Activated naive CD4-positive, alpha-beta T cell treated with anti-CD3 and anti-CD28 coated beads for 36 hours (primary cell): ENCODE measurements at regions of chr12 and their contacts with region 1.

Region 1: DNA sequence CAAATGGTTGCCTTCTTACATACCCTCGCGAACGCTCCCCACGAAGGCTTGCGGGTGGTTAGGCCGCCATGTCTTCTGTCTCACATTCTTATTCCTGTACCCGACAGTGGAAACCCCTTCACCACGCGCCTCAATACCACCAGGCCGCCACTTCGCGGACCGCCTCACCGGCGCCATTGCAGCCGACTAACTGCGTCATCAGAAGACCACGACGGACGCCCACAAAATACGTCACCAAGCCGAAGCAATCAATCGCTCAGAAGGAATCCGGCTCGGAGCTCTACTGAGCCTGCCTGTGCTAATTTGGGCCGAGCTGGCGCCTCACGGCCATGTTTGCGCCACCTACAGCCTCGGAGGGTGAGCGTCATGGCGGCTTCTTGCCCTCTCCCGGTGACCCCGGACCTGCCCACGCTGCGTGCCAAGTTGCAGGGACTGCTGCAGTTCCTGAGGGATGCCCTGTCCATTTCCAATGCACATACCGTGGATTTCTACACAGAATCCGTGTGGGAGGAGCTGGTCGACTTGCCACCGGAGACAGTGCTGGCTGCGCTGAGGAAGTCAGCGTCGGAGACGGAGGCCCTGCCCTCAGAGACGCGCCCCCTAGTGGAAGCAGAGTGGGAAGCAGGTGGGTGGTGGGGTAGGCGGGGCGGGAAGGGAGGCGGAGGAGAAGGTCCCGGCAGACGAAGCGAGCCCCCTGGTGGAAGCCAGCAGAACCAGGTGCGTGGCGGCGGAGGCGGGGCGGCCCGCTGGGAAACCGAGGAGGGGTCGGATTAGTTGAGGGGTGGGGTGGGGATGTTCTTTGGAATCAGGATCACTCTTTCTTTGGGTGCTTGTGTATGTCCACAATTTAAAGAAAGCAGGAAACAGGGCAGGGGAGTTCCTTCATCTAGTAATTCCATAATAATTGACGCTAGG is at the starts of genes CCDC59 and METTL25:
- DNase-seq: peak; percentile 98
- H3K4me3 Mint-ChIP-seq: peak within 1 kb of the TSS; percentile 93
- H3K27ac Mint-ChIP-seq: peak within 1 kb of the TSS; percentile 96
- H3K4me1 Mint-ChIP-seq: peaks cover 42% of the 10 kb centered on the region
- H3K27me3 Mint-ChIP-seq: no peaks in the 10 kb centered on the region
- total RNA-seq, gene CCDC59: 87.1 to 93.3 TPM
- total RNA-seq, gene METTL25: 4.1 to 5.7 TPM

Region 2: DNA sequence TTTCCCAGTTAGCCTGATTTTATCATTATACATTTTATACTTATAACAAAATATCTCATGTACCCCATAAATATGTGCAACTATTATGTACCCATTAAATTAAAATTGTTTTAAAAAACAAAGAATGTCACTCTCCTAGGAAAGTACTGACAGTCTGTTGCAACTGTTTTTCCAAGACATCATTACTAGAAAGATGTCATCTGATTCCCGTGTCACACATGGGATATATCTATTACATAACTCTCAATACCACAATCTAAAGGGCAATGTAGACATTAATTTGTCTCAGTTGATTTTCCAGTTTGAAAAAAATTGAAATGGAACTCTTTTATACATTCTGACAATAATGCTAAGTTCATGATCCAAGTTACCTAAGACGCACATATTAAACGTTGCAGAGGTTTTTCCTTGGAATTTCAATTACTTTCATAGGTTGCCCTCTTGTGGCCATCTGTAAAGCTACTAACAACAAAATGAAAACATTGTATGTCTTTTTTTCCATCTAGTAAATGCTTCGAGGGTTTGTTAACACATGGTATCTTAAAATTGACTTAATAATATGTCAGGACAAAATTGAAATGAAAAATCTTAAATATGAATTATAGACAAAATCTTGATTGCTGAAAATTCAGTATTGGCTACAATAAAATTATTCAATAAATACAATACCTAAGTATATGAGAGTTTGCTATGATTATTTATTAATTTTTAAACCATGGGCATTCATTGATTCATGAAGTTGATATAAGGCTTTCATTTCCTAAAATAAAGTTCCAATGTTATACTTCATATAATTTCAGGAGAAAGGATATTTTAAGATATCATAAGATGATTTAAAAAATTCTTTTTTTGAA is 730.9 kb before region 1 on chr12:
- CTCF ChIA-PET with region 1: no interaction called
- intact Hi-C with region 1: no loop called
- DNase-seq: no peak
- H3K4me3 Mint-ChIP-seq: no peak overlapping the region
- H3K27ac Mint-ChIP-seq: no peak overlapping the region
- H3K4me1 Mint-ChIP-seq: no peaks in the 10 kb centered on the region
- H3K27me3 Mint-ChIP-seq: peaks cover 2% of the 10 kb centered on the region

Region 3: DNA sequence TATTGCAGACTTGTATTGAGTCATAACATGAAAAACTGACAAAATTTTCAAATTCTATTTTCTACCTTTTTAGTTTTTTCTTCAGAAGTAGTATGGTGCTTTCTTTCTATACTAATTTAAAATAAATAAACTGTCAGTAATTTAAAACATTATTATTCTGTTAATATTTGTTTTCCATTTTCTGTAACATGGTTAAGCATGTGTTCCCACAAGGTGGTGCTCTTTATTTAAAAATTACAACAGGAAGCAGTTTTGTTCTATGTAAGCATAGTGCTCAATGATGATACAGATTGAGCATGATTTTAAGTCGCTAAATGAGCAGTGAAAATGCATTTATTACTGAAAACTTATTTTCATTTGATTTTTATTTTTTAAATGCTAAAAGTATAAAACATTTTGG is 714.0 kb before region 1 on chr12:
- CTCF ChIA-PET with region 1: interaction called, 3 read pairs
- intact Hi-C with region 1: loop called (anchors 1 kb)
- DNase-seq: no peak
- H3K4me3 Mint-ChIP-seq: no peak overlapping the region
- H3K27ac Mint-ChIP-seq: no peak overlapping the region
- H3K4me1 Mint-ChIP-seq: no peaks in the 10 kb centered on the region
- H3K27me3 Mint-ChIP-seq: peaks cover 11% of the 10 kb centered on the region

Region 4: DNA sequence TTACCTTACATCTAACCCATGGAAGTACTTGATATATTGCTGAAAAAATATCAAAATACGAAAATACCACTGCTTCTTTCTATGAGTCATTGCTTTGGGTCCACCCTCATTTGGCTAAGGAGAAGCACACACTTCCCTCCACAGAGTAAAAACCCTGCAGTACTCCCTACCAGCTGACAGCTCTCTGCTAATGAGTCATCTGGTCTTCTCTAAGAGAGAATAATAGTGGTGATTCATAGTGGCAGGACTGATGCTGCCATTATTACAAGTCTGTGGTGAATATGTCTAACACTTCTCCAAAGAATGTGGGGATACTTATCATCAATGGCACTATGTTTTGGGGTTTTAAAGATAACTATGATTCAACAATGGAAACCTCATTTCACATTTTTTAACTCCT is 690.0 kb before region 1 on chr12:
- CTCF ChIA-PET with region 1: no interaction called
- intact Hi-C with region 1: loop called (anchors 1 kb)
- DNase-seq: peak; percentile 34
- H3K4me3 Mint-ChIP-seq: no peak overlapping the region
- H3K27ac Mint-ChIP-seq: no peak overlapping the region
- H3K4me1 Mint-ChIP-seq: peaks cover 7% of the 10 kb centered on the region
- H3K27me3 Mint-ChIP-seq: peaks cover 8% of the 10 kb centered on the region

Region 5: GRCh38 chr12:81759215-81760051 is 599.0 kb before region 1 on chr12 and contains the start of gene PPFIA2:
- CTCF ChIA-PET with region 1: no interaction called
- intact Hi-C with region 1: loop called (anchors 1 kb)
- DNase-seq: peak; percentile 53
- H3K4me3 Mint-ChIP-seq: peak within 1 kb of the TSS; percentile 67
- H3K27ac Mint-ChIP-seq: no peak within 1 kb of the TSS
- H3K4me1 Mint-ChIP-seq: peaks cover 13% of the 10 kb centered on the region
- H3K27me3 Mint-ChIP-seq: peaks cover 40% of the 10 kb centered on the region
- total RNA-seq, gene PPFIA2: not detected

Region 6: GRCh38 chr12:81797100-81797499 is 561.4 kb before region 1 on chr12:
- CTCF ChIA-PET with region 1: no interaction called
- intact Hi-C with region 1: loop called (anchors 5 kb)
- DNase-seq: no peak
- H3K4me3 Mint-ChIP-seq: no peak overlapping the region
- H3K27ac Mint-ChIP-seq: no peak overlapping the region
- H3K4me1 Mint-ChIP-seq: peaks cover 15% of the 10 kb centered on the region
- H3K27me3 Mint-ChIP-seq: peaks cover 15% of the 10 kb centered on the region

Region 7: GRCh38 chr12:81942594-81942993 is 415.9 kb before region 1 on chr12:
- CTCF ChIA-PET with region 1: no interaction called
- intact Hi-C with region 1: loop called (anchors 5 kb)
- DNase-seq: peak; percentile 6
- H3K4me3 Mint-ChIP-seq: no peak overlapping the region
- H3K27ac Mint-ChIP-seq: no peak overlapping the region
- H3K4me1 Mint-ChIP-seq: peaks cover 37% of the 10 kb centered on the region
- H3K27me3 Mint-ChIP-seq: no peaks in the 10 kb centered on the region